ENCODE measurements at regions of chr5 and their contacts with region 1.

Region 1: DNA sequence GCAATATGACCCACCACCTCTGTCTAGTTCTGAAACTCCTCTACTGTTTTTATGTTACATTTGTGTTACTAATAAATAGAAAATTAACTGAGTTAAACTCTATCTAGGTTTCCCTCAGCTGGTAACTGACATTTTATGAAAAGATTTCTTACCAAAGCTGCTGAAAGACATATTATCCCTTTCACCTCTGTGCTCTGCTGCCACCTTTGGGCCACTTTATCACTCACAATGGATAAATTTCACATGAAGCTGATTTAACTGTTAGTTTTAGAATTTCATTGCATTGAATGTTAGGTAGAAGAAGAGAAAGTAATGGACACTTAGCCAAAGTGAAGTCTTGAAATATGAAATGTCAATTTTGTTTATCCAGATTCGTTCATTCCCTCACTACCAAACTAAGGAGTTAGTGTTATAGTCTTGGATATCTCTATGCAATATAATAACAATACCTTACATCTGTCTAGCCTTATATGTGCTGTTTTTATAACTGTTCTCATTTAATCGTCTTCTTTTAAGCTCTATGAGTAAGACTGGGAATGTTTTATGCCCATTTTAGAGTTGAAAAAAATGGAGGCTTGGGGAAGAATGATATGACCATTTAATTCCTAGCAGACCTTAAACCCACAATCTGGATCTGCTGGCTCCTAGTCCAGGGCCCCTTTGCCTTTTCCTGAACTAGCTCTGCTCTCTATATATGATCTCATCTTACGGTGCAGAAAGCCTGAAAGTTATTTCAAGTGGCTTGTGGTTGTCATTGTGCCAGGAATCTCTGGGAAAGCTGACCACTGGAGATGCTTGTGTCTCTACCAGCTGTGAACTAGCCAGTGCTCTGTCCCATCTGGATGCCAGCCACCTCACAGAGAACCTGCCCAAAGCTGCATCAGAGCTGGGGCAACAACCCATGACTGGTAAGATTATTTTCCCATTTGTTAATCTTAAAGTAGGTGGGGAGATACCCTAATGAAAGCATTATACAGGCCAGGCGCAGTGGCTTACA is 97.1 kb downstream of the GOLPH3 start:
- DNase-seq: no peak
- ATAC-seq: peak; percentile 62
- H3K4me3 ChIP-seq: no peak overlapping the region
- H3K27ac ChIP-seq: no peak overlapping the region
- H3K4me1 ChIP-seq: no peaks in the 10 kb centered on the region
- H3K27me3 ChIP-seq: no peaks in the 10 kb centered on the region
- CTCF ChIP-seq: peak; percentile 75

Region 2: DNA sequence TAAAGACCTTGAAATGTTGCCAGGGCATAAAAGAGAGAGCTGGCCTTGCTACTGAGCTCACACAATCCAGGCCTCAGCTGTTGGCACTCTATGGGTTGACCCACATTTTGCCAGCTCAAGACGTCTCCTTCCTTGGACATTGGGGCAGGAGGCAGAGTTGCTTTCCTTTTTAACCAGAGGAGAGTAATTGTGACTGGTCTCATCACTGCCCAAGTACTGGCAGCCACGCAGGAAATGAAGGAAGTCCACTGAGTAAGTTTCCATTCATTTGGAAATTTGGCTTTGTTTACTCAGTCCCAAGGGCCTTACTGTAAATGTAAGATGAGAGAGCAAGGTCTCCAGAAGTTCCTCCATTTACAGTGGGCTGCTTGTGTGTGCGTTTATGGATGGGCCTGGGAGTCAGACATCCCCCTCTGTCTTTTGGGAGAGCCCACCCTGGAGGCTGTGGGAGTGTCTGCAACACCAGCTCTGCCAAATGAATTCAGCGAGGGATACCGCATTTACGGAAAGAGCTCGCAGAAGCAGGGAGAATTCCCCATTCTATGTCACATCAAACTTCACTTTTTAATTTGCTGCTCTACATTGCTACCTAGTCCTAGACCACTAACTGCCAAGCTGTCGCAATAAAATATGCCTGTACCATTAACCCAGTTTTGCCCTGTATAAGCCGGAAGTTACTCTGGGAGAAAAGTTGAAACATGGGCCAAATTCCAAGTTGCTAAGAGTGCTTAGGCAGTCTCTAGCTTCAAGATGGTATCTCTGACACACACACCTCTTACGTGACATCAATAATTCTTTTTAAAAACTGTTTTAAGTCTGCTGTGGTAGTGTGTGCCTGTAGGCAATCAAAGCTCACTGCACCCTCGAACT is 462.6 kb before region 1 on chr5:
- intact Hi-C with region 1: no loop called
- DNase-seq: no peak
- ATAC-seq: peak; percentile 47
- H3K4me3 ChIP-seq: no peak overlapping the region
- H3K27ac ChIP-seq: no peak overlapping the region
- H3K4me1 ChIP-seq: no peaks in the 10 kb centered on the region
- H3K27me3 ChIP-seq: peaks cover 5% of the 10 kb centered on the region
- CTCF ChIP-seq: no peak

Region 3: DNA sequence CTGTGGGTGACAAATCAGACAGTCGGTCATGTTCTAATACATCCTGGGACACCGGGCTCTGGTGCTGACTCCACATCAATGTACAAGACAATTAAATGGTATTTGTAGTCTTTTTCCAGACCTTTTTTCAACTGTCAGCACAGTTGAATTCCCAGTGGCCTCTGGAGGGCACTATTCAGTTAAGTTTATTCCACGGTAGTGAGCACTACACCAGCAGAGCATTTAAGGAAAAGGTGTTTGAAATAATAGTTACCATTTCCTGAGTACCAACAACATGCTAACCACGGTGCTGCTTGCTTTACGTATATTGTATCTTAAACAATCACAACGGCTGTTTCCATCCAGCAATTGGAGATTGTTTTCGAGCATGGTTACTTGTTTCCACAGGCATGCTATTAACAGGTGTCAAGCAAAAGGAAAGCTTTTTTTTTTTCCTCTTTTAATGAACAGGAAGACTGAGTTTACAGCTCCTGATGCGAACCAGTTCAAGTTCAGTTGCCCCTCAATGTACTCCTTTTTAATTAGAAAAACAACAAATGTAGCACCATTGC is 251.4 kb before region 1 on chr5:
- intact Hi-C with region 1: loop called (anchors 5 kb)
- DNase-seq: no peak
- ATAC-seq: peak; percentile 92
- H3K4me3 ChIP-seq: no peak overlapping the region
- H3K27ac ChIP-seq: no peak overlapping the region
- H3K4me1 ChIP-seq: no peaks in the 10 kb centered on the region
- H3K27me3 ChIP-seq: no peaks in the 10 kb centered on the region
- CTCF ChIP-seq: peak; percentile 68